Heart left ventricle (tissue), 16 donors: ENCODE measurements at regions of chr12 and their contacts with region 1.

Region 1: DNA sequence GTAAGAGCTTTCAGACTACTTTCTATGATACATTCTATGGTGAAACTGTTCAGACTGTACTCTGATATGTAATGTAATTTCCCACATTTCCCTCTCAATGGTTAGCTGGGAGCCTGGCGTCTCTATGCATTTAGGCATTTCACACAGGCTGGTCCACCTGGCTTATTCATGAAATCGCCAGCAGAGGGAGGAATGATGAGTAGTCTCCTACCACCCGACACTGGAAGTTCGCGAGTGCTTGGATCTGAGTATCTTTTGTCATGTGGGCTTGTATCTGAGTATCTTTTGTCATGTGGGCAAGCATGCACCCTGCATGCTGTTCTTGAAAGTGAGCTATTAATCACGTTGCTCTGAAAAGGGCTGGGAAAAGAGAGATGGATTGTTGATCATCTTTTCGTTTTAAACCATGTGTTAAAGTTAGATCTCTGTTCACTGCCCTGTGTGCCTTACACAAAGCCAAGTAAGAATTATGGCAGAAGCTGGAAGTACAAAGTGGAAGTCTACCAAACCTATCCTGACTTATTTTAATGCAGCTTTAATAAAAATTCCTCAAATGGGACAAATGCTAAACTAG is 235.0 kb downstream of the ATP23 start:
- DNase-seq: peak in 3 of 5 donors; percentile 20 to 45 (median 32)
- ATAC-seq: no peak
- H3K4me3 ChIP-seq: no peak overlapping the region
- H3K27ac ChIP-seq: no peak overlapping the region
- H3K4me1 ChIP-seq: peaks cover 0 to 4% (median 0%) of the 10 kb centered on the region in 12 donors
- H3K27me3 ChIP-seq: no peaks in the 10 kb centered on the region
- CTCF ChIP-seq: peak; percentile 18 to 64 (median 44)
- POLR2A ChIP-seq: no peak

Region 2: DNA sequence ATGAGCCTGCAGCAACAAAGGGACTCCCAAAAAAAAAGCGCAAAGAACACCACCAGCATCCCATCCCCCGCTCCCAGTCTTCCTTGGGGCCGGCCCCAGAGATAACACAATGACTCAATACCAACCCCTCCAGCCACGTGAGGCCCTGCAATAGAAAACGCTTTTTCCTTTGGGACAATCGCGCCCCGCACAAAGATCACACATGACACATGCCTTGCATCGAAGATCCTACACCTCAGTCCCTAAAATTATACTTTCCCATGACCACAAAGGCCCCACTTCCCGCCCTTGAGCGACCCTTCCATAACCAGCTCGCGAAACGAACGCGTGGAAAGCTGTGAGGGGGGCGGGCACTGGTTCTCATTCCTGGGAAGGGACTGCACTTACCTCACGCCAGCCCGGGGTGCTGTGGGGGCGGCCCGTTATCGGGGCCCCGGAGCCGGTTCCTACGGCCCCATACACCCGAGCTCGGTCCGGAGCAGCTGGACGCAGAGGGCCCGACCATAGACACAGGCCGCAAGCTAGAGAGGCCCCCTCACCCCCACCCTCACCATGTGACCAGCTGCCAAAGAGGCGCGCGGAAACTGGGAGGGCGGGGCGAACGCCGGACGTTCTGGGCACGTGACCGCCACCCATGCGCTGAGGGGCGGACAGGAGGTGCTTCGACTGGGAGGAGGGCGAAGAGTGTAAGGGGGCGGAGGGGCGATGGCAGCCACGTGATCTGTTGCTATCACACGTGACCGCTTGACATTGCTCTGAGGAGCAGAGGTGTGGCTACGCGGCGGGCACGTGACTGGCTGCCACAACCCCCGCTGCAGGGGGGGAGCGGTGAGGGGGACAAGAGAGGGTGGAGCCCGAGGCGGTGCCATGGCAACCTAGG is 424.4 kb before region 1 on chr12 and contains the start of gene CDK4:
- intact Hi-C with region 1: no loop called
- DNase-seq: peak; percentile 99 to 100 (median 99)
- ATAC-seq: peak; percentile 89 to 95 (median 92)
- H3K4me3 ChIP-seq: peak within 1 kb of the TSS; percentile 43 to 89 (median 72)
- H3K27ac ChIP-seq: peak within 1 kb of the TSS; percentile 71 to 96 (median 91)
- H3K4me1 ChIP-seq: peaks cover 0 to 52% (median 33%) of the 10 kb centered on the region in 12 donors
- H3K27me3 ChIP-seq: no peaks in the 10 kb centered on the region
- CTCF ChIP-seq: no peak
- POLR2A ChIP-seq: peak in 1 of 2 donors; percentile 69
- total RNA-seq, gene CDK4: 38.1 to 62.1 (median 50.2) TPM

Region 3: GRCh38 chr12:58296863-58297262 is 120.5 kb after region 1 on chr12:
- intact Hi-C with region 1: loop called in 3 of 10 experiments (anchors 5 to 10 kb)
- DNase-seq: no peak
- ATAC-seq: no peak
- H3K4me3 ChIP-seq: no peak overlapping the region
- H3K27ac ChIP-seq: no peak overlapping the region
- H3K4me1 ChIP-seq: no peaks in the 10 kb centered on the region
- H3K27me3 ChIP-seq: no peaks in the 10 kb centered on the region
- CTCF ChIP-seq: no peak
- POLR2A ChIP-seq: no peak

Region 4: DNA sequence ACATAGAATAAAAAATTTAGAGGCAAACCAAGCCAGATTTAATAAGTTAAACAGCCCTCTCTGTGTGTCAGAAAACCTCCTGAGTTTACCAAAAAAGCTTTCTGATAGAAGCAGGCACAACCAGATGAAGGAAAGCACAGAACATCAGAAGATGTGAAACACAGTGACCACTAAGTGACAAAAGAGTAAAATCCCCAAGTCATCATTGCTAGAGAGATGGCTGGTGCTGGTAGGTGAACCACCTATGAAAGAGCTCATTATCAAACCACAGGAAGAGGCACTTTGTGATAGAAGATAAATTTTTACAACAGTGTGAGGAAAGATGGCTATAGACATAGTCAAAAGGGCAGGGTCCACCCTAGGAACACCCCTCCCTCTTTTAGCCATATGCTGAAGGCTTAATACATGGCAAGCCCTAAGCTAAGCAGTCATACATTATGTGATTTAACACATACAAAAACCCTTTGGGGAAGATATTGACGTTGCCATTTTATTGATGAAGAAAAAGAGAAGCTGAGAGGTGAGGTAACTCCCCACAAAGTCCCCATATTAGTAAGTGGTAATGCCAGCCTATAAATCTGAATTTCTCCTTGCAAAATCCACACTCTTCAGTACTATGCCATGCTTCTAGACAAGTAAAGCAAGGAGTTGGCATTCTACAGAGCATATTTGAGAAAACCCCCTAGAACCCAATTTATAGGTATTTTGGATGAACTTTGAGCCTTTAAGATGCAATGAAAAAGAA is 294.1 kb after region 1 on chr12:
- intact Hi-C with region 1: no loop called
- DNase-seq: no peak
- ATAC-seq: no peak
- H3K4me3 ChIP-seq: no peak overlapping the region
- H3K27ac ChIP-seq: no peak overlapping the region
- H3K4me1 ChIP-seq: no peaks in the 10 kb centered on the region
- H3K27me3 ChIP-seq: no peaks in the 10 kb centered on the region
- CTCF ChIP-seq: no peak
- POLR2A ChIP-seq: no peak